Transverse colon (tissue), 4 donors: ENCODE measurements at regions of chr11 and their contacts with region 1.

Region 1: DNA sequence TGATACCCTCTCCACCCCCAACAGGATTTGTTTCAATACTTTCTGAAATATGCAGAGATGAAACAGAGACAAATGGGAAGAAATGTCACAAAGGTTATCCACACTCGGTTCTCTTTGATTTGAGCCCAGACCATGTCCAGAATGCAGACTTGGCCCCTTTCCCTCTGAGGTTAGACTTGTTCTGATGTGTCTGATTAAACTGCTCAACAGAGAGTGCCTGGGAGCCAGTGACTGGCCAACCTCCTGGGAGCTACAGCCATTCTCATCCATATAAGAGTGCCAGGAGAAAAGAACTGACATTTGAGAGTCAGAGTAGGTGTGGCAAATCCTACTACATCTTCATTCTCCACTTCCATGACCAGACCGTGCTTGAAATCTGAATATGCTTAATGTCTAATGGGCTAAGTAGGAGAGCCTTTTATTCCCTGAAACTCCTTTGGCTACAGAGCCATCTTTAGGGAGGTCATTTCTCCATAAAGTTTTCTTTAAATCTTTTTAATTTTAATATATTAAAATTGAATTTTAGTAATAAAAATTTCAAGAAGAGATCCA is 201.4 kb downstream of the BLID start:
- DNase-seq: no peak
- H3K4me3 ChIP-seq: no peak overlapping the region
- H3K27ac ChIP-seq: no peak overlapping the region
- H3K4me1 ChIP-seq: no peaks in the 10 kb centered on the region
- H3K27me3 ChIP-seq: no peaks in the 10 kb centered on the region
- CTCF ChIP-seq: no peak
- EP300 ChIP-seq: no peak
- POLR2A ChIP-seq: no peak

Region 2: GRCh38 chr11:120746836-120747609 is 1167.6 kb before region 1 on chr11:
- in situ Hi-C with region 1: no loop called
- intact Hi-C with region 1: loop called (anchors 5 kb)
- DNase-seq: no peak
- H3K4me3 ChIP-seq: no peak overlapping the region
- H3K27ac ChIP-seq: no peak overlapping the region
- H3K4me1 ChIP-seq: no peaks in the 10 kb centered on the region
- H3K27me3 ChIP-seq: peaks cover 11% of the 10 kb centered on the region
- CTCF ChIP-seq: no peak
- EP300 ChIP-seq: no peak
- POLR2A ChIP-seq: no peak

Region 3: GRCh38 chr11:121318848-121319834 is 595.4 kb before region 1 on chr11:
- in situ Hi-C with region 1: no loop called
- intact Hi-C with region 1: no loop called
- DNase-seq: no peak
- H3K4me3 ChIP-seq: no peak overlapping the region
- H3K27ac ChIP-seq: no peak overlapping the region
- H3K4me1 ChIP-seq: peaks cover 0 to 4% (median 0%) of the 10 kb centered on the region in 4 donors
- H3K27me3 ChIP-seq: no peaks in the 10 kb centered on the region
- CTCF ChIP-seq: peak; percentile 67 to 90 (median 80)
- EP300 ChIP-seq: no peak
- POLR2A ChIP-seq: no peak

Region 4: GRCh38 chr11:121437018-121437685 is 477.4 kb before region 1 on chr11:
- in situ Hi-C with region 1: no loop called
- intact Hi-C with region 1: no loop called
- DNase-seq: no peak
- H3K4me3 ChIP-seq: no peak overlapping the region
- H3K27ac ChIP-seq: no peak overlapping the region
- H3K4me1 ChIP-seq: no peaks in the 10 kb centered on the region
- H3K27me3 ChIP-seq: no peaks in the 10 kb centered on the region
- CTCF ChIP-seq: no peak
- EP300 ChIP-seq: no peak
- POLR2A ChIP-seq: no peak